ENCODE measurements at regions of chr5 and their contacts with region 1.

Region 1: DNA sequence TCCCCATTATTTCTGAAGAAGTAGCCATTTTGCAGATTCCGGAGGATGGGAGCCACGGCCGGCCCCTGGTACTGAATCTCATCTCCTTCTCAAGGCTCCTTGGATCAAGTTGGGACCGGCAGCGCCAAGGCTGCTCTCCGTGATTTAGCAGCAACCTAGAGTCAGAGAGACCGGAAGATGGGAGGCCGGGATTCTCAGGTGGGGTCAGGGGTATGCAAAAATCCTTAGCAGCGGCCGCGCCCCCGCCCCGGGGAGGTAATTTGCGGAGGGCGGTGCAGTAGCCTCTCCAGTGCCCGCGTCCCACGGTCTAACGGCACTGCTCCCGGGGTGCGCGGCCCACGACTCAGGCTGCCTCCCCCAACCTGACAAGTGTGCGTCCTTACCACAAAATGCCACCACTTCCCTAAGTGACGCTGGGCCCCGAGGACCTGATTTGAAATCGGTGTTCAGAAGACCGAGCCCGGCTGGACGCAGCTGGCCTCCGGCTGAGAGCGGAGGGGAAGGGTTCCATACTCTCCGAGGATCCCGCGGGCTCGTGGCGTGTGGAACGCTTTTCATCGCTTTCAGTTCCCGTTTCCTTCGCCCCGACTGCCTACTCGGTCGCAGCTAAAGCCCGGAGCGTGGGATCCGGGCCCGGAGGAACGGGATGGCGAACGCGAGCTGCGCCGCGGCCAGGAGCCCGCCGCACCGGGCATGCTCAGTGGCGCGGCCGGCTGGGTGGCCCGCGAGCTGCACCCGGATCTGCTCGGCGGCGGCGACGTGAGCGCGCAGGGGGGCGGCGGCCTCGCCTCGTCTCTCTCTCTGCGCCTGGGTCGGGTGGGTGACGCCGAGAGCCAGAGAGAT is at the start of gene SCAMP1:
- DNase-seq: peak; percentile 94
- H3K4me3 ChIP-seq: peak within 1 kb of the TSS; percentile 95 to 100 (median 96)
- H3K27ac ChIP-seq: peak within 1 kb of the TSS; percentile 76
- H3K4me1 ChIP-seq: no peaks in the 10 kb centered on the region
- H3K27me3 ChIP-seq: no peaks in the 10 kb centered on the region
- CTCF ChIP-seq: peak; percentile 5 to 42
- total RNA-seq, gene SCAMP1: 48.8 to 126 TPM

Region 2: DNA sequence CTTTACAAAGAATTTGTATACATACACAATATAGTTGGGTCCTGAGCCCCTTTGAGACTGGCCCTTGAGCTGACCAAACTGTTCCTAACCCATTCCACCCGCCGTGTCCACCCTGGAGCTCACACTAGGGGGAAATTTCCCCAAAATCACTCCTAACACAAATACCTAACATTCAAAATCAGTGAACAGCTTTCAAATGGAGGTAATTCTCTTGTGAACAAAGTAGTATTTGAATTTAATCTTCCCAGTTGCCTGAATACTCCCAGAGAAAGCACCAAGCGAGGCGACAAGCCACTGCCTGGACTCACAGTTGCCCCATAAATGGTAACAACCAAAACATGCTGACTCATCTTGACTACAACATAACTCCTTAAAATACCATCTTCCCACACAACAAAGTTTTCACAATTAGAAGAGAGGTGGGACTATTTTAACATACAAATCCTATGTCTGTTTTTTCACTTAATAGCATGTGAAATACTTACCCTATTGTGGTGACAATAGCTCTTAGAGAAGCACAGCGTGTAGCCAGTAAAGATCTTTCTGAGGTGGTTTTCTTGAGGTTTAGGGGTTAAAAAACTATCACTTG is 31.4 kb before region 1 on chr5:
- CTCF ChIA-PET with region 1: no interaction called
- dilution Hi-C with region 1: no loop called
- in situ Hi-C with region 1: no loop called
- intact Hi-C with region 1: loop called (anchors 5 kb)
- DNase-seq: peak; percentile 46
- H3K4me3 ChIP-seq: no peak overlapping the region
- H3K27ac ChIP-seq: peak overlapping the region; percentile 75
- H3K4me1 ChIP-seq: peaks cover 21% of the 10 kb centered on the region
- H3K27me3 ChIP-seq: no peaks in the 10 kb centered on the region
- CTCF ChIP-seq: no peak

Region 3: DNA sequence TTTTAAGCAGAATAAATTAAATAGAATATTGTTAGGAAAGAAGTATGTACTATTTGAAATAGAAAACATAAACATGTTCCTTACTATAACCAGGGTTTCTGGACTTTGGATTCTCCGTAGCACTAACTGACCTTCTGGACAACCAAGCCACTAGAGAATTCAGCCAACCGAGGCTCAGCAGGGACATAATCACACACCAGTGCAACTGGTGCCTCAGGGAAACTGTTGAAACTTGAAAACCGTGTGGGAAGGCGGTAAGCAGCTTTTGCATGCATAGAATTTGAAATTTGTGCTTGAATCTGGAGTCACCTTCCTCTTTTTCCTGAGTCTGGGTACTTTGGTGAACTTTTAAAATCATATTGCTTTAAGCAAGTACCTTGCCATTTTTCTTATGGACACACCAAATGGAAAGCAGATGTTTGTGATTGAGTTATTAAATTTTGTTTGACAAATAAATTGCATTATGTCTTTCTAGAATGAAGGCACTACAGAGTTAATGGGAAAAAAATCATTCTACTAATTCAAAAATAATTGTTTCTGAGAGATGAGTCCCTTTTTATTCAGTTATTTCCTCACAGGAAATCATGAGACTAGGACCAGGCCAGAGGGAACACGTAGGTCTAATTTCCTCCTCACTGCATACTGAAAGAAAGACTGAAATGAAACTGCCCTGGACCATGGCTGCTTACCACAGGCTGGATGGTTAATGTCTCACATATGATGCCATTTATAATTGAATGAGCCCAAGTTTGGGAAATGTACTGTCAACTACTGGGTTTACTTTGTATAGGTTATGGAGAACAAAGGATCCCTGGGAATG is 20.2 kb before region 1 on chr5:
- CTCF ChIA-PET with region 1: interaction called, 3 read pairs
- dilution Hi-C with region 1: no loop called
- in situ Hi-C with region 1: no loop called
- intact Hi-C with region 1: loop called (anchors 2 kb)
- DNase-seq: no peak
- H3K4me3 ChIP-seq: no peak overlapping the region
- H3K27ac ChIP-seq: no peak overlapping the region
- H3K4me1 ChIP-seq: no peaks in the 10 kb centered on the region
- H3K27me3 ChIP-seq: no peaks in the 10 kb centered on the region
- CTCF ChIP-seq: no peak

Region 4: DNA sequence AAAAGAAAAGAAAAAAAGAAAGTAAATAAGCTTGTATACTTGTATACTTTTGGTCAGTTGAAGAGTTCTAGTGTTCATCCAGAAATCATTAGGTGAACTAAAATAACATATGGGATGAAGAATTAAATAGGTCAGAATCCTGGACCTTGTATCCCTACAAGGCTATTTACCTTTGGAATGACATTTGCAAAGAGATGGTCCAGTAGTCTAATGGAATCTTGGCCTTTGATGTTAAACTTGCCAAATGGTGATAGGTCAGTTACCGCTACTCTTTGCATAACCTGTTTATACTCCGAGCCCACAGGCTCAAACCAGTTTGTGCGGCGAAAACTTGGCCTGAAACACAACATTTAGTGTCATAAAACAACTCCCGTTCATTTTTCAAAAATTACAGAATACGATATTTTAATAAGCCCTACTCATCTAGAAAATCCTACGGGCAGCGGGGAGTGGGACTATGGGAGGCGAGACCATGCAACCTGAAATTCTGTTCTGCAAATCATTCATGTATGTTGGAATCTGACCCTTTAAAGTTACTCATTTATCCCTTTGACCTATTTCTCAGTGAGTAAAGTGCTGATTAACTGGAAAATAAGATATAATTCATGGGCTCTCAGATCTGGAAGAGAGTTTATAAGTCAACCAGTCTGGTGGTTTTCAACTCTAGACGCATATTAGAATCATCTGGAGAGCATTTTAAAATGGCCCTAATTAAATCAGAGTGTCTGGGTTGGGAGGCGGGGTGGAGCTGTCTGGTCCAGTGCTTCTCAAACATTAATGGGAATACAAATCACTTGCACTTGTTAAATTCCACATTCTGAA is 670.8 kb after region 1 on chr5:
- CTCF ChIA-PET with region 1: no interaction called
- dilution Hi-C with region 1: no loop called
- in situ Hi-C with region 1: no loop called
- intact Hi-C with region 1: no loop called
- DNase-seq: no peak
- H3K4me3 ChIP-seq: no peak overlapping the region
- H3K27ac ChIP-seq: no peak overlapping the region
- H3K4me1 ChIP-seq: no peaks in the 10 kb centered on the region
- H3K27me3 ChIP-seq: no peaks in the 10 kb centered on the region
- CTCF ChIP-seq: no peak

Measured in mammary epithelial cell (primary cell).